Dorsolateral prefrontal cortex (tissue), 120 donors: ENCODE measurements at regions of chr22 and their contacts with region 1.

Region 1: GRCh38 chr22:42614312-42615091 is at the start of gene POLDIP3:
- DNase-seq: peak; percentile 99 to 100 (median 99)
- H3K4me3 ChIP-seq: peak within 1 kb of the TSS; percentile 74 to 100 (median 91)
- H3K27ac ChIP-seq: peak within 1 kb of the TSS; percentile 88 to 100 (median 98)
- H3K27me3 ChIP-seq: no peaks in the 10 kb centered on the region
- CTCF ChIP-seq: peak in 55 of 56 donors; percentile 31 to 81 (median 59)
- total RNA-seq, gene POLDIP3: 47.0 to 95.5 (median 65.3) TPM

Region 2: DNA sequence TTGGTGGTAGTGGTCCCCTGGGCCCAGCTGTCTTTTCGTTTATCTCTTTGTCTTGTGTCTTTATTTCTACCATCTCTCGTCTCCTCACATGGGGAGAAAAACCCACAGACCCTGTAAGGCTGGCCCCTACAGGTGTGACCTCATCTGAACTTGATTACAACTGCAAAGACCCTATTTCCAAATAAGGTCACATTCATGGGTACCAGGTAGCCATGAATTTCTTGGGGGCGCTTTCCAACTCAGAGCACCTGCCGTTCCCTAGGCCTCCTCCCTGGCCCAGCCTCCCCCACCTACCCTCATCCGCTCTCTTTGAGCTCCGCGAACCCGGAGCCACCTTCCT is 80.9 kb before region 1 on chr22:
- intact Hi-C with region 1: loop called in 1 of 2 experiments (anchors 5 kb)
- DNase-seq: no peak
- H3K4me3 ChIP-seq: peak overlapping the region in 3 of 59 donors; percentile 32 to 44 (median 38)
- H3K27ac ChIP-seq: peak overlapping the region in 23 of 59 donors; percentile 8 to 91 (median 59)
- H3K27me3 ChIP-seq: no peaks in the 10 kb centered on the region
- CTCF ChIP-seq: no peak

Region 3: GRCh38 chr22:42649246-42650099 is 35.0 kb after region 1 on chr22 and contains the start of gene CYB5R3:
- intact Hi-C with region 1: loop called in 1 of 2 experiments (anchors 2 kb)
- DNase-seq: peak; percentile 64 to 88 (median 78)
- H3K4me3 ChIP-seq: peak within 1 kb of the TSS; percentile 71 to 98 (median 88)
- H3K27ac ChIP-seq: peak within 1 kb of the TSS; percentile 39 to 99 (median 94)
- H3K27me3 ChIP-seq: no peaks in the 10 kb centered on the region
- CTCF ChIP-seq: peak in 25 of 56 donors; percentile 11 to 45 (median 22)
- total RNA-seq, gene CYB5R3: 85.4 to 229 (median 131) TPM